T-cell (primary cell): ENCODE measurements at regions of chr5 and their contacts with region 1.

Region 1: DNA sequence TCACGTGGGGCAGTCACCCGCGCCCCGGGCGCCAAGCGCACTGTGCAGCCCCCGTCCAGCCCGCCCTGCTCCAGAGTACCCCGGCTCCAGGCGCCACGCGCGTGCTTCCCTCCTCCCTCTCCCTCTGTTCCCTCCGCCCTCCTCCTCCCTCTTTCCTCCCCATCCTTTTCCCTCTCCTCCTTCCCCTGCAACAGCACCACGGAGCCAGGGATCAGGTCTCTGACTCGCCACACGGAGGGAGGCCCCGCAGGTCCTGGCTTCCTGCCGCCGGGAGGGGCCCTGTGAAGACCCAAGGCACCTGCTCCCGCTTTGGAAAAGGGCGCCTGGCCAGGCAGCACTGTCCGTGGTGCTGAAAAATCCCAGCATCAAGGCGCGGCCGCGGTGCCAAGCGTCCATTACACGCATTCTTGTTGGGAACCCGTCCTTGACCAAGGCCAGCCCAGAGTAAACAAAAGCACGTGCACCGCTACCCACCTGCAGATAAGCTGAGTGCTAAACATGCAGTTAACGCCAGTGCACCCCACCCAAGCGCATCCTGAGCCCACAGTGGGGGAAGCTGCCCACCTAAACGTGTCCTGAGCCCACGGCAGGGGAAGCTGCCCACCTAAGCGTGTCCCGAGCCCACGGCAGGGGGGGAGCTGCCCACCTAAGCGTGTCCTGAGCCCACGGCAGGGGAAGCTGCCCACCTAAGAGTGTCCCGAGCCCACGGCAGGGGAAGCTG is 21.7 kb downstream of the SLC6A18 start:
- DNase-seq: peak in 5 of 35 experiments; percentile 6 to 37 (median 18)
- ATAC-seq: no peak
- H3K4me3 ChIP-seq: no peak overlapping the region
- H3K4me3 Mint-ChIP-seq: no peak overlapping the region
- H3K27ac ChIP-seq: no peak overlapping the region
- H3K27ac Mint-ChIP-seq: no peak overlapping the region
- H3K4me1 ChIP-seq: peaks cover 0 to 3% of the 10 kb centered on the region in 2 experiments
- H3K4me1 Mint-ChIP-seq: no peaks in the 10 kb centered on the region
- H3K27me3 ChIP-seq: peaks cover 0 to 51% of the 10 kb centered on the region in 2 experiments
- H3K27me3 Mint-ChIP-seq: peaks cover 0 to 11% of the 10 kb centered on the region in 2 donors

Region 2: DNA sequence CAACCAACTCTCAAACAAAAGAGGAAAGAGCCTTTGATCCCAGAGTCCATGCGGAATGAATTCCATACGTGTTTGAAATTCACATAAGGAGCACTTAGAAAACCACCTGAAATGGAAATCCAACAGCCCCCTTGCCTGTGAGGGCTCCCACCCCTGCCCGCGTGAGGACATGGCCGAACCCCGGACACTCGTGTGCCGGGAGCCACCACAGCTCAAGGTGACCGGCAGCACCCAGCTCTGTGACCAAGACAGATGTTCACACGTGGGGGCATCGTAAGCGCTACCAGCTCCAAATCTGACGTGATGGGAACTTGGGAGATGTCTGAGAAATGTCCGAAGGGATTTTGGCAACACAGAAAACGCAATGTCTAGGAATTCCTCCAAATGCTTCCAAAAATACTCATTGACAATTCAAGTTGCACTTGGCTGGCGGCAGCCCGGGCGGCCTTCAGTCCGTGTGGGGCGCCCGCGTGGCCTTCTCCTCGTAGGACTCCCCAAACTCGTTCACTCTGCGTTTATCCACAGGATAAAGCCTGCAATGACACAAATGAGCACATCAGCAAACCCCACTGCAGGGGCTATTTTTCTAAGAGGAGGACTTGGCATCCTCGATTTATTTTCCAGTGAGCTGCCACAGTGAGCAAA is 71.2 kb after region 1 on chr5:
- CTCF ChIA-PET with region 1: no interaction called
- POLR2A ChIA-PET with region 1: interaction called in 1 of 2 experiments, 12 read pairs
- DNase-seq: peak in 1 of 35 experiments; percentile 3
- ATAC-seq: no peak
- H3K4me3 ChIP-seq: no peak overlapping the region
- H3K4me3 Mint-ChIP-seq: no peak overlapping the region
- H3K27ac ChIP-seq: no peak overlapping the region
- H3K27ac Mint-ChIP-seq: no peak overlapping the region
- H3K4me1 ChIP-seq: peaks cover 38 to 43% of the 10 kb centered on the region in 2 experiments
- H3K4me1 Mint-ChIP-seq: peaks cover 45 to 48% (median 46%) of the 10 kb centered on the region in 3 donors
- H3K27me3 ChIP-seq: no peaks in the 10 kb centered on the region
- H3K27me3 Mint-ChIP-seq: no peaks in the 10 kb centered on the region

Region 3: DNA sequence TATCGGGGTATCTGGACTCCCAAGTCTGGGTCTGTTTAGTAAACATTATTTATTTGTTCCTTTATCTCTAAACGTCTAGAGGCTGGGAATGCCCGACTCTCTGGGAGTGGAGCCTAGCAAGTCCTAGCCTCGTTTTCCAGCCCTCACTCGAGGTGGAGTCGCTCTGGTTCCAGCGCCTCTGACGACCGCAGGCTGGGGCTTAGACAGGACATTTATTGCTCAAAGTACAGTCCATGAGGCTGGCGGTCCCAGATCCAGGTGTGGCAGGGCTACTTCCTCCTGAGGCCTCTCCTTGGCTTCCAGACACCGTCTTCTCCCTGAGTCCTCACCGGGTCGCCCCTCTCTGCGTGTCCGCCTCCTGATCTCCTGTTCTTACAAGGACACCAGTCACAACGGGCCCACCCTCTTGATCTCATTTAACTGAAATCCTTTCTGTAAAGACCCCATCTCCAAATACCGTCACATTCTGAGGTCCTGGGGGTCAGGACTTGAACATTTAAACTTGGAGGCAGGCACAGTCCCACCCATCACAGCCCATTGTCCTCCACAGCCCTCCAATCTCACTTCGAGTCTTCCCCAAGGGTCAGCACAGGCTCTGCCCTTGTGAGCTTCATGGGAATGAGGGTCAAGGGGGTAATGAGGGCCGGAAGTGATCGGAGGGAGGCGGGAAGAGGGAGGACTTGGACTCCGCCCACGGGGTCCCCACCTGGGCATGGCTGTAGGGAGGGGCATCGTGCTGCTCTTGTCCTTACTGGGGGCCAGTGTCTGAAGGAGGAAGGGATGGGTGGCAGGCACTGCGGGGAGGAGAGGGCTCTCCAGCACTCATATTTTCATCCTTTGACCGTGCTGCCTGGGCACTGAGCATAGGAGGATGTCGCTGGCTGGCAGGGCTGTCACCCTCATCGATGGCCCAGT is 110.3 kb after region 1 on chr5:
- CTCF ChIA-PET with region 1: no interaction called
- POLR2A ChIA-PET with region 1: no interaction called
- DNase-seq: no peak
- ATAC-seq: no peak
- H3K4me3 ChIP-seq: no peak overlapping the region
- H3K4me3 Mint-ChIP-seq: no peak overlapping the region
- H3K27ac ChIP-seq: no peak overlapping the region
- H3K27ac Mint-ChIP-seq: no peak overlapping the region
- H3K4me1 ChIP-seq: no peaks in the 10 kb centered on the region
- H3K4me1 Mint-ChIP-seq: no peaks in the 10 kb centered on the region
- H3K27me3 ChIP-seq: peaks cover 0 to 58% of the 10 kb centered on the region in 2 experiments
- H3K27me3 Mint-ChIP-seq: peaks cover 0 to 17% of the 10 kb centered on the region in 2 donors